A549 (cell line): ENCODE measurements at regions of chr19 and their contacts with region 1.

Region 1: DNA sequence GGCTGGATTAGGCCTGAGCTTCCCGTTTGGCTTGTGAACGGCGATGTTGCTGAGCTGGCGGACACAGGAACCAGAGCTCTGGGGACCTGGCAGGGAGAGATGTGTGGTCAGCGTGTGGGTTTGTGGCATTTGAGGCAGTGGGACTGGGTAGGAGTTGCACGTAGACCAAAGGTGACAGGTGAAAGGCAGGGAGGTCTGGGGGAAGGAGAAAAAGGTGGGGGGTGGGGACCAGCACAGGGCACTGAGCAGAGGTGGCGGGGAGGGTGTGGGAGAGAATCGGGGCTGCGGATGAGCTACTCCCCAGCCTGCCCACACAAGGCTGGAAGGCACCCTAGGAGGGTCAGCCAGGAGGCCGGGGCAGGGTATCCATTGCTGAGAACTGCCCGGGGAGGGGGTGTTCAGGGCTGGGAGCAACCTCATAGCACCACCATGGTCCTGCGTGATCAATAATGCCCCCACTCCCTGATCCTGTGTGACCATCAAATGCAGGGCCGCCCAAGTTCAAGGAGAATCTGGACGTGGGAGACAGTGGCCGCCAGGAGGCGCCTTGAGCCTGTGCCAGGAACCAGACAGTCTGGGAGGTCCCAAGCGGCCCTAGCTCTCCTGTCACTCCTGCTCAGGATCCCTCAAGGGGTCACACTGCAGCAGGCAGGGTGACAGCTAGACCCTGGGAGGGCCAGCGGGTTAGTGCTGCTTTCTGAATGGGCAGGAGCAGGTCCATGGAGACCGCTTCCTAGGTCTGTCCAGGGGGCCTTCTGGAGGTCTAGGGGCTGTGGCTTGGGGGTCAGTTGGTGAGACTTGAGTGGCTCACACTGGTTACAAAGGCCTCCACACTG is 12.8 kb upstream of the SELENOW start:
- DNase-seq: peak; percentile 58 to 74
- ATAC-seq: peak; percentile 66 to 85
- H3K4me3 ChIP-seq: no peak overlapping the region
- H3K27ac ChIP-seq: no peak overlapping the region
- H3K4me1 ChIP-seq: no peaks in the 10 kb centered on the region
- CTCF ChIP-seq: peak; percentile 83
- EP300 ChIP-seq: no peak
- POLR2A ChIP-seq: no peak
- RAD21 ChIP-seq: peak; percentile 61 to 84

Region 2: GRCh38 chr19:47483800-47484690 is 281.7 kb before region 1 on chr19 and contains the start of gene KPTN:
- CTCF ChIA-PET with region 1: no interaction called
- POLR2A ChIA-PET with region 1: no interaction called
- DNase-seq: peak; percentile 96 to 99
- ATAC-seq: peak; percentile 84 to 90
- H3K4me3 ChIP-seq: peak within 1 kb of the TSS; percentile 53
- H3K27ac ChIP-seq: peak within 1 kb of the TSS; percentile 96 to 97
- H3K4me1 ChIP-seq: peaks cover 12% of the 10 kb centered on the region; the same call in 2 of the 3 replicates
- CTCF ChIP-seq: peak; percentile 98
- EP300 ChIP-seq: no peak
- POLR2A ChIP-seq: peak; percentile 88
- RAD21 ChIP-seq: peak; percentile 70 to 75
- polyA plus RNA-seq, gene KPTN: 10.6 and 12.5 TPM in 2 replicates

Region 3: GRCh38 chr19:47633519-47633918 is 132.2 kb before region 1 on chr19:
- CTCF ChIA-PET with region 1: no interaction called
- POLR2A ChIA-PET with region 1: no interaction called
- DNase-seq: no peak
- ATAC-seq: no peak; a peak in 1 of 6 replicates
- H3K4me3 ChIP-seq: no peak overlapping the region
- H3K27ac ChIP-seq: no peak overlapping the region
- H3K4me1 ChIP-seq: peaks cover 14% of the 10 kb centered on the region
- CTCF ChIP-seq: no peak
- EP300 ChIP-seq: no peak
- POLR2A ChIP-seq: no peak
- RAD21 ChIP-seq: no peak

Region 4: DNA sequence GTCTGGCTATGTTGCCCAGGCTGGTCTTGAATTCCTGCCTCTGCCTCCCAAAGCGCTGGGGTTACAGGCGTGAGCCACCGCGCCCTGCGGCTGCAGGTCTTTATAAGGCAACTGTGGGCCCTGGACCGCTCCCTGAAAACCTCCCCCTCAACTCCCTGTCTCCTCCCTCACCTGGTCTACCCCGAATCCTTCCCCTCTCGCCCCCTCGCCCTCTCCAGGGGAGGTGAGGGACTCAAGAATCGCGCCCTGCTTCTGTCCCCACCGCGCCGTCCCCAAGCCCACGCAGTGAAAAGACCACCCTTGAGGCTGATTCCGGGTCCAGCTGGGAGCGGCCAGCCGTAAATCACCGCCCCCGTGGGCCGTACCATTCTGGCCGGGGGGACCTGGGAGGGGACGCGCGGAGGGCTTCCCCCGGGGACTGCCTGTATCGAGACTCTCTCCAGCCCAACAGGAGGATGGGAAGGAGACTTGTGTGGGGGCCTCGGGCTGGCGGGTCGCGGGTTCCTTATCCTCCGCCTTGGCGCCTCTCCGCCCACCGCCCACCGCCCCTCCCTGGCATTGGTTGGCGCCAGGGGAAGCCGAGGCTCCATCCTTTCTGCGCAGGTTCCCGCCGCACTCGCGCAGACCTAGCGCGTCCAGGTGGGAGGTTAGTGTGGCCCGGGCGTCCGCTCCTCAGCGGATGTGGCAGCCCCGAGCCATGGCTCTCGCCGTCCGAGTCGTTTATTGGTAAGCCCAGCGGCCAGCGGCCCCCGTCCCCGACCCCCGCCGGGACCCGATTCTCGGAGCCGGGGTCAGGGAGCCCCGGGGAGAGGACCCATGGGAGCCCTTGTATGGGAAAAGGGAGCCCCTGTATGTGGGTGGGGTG is 12.6 kb after region 1 on chr19 and contains the start of gene SELENOW:
- CTCF ChIA-PET with region 1: interaction called, 26 read pairs
- POLR2A ChIA-PET with region 1: no interaction called
- DNase-seq: peak; percentile 83 to 90
- ATAC-seq: peak; percentile 88 to 95
- H3K4me3 ChIP-seq: peak within 1 kb of the TSS; percentile 79
- H3K27ac ChIP-seq: peak within 1 kb of the TSS; percentile 90 to 94
- H3K4me1 ChIP-seq: peaks cover 16% of the 10 kb centered on the region
- CTCF ChIP-seq: no peak
- EP300 ChIP-seq: no peak
- POLR2A ChIP-seq: peak; percentile 99
- RAD21 ChIP-seq: no peak
- polyA plus RNA-seq, gene SELENOW: 114 and 157 TPM in 2 replicates